T-cell (primary cell): ENCODE measurements at regions of chr7 and their contacts with region 1.

Region 1: DNA sequence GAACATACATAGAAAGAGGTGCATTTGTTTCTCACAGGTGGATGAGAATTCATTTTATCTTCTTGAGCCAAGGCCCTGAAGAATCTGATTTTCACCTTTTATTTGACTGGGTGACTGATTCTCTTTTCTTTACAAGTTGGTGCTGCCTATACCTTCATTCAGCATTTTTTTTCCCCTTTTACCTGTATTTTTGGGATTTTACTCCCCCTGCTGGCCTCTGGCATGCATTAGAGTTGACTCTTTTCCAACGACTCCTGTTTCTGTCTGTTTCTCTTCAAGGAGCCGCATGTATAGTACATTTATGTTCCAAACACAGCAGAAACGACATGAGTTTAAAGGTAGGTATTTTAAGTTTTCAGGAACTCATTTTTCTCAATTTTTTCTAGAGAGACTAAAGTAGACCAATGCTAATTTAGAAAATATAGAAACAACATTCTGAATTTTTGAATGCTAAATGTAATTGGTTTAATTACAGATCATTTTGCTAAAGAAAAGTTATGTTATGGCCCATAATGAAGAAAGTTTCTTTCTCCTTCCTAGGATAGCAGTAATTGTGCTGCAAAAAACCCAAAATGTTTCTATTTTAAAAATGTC is 149.8 kb upstream of the HDAC9 start:
- DNase-seq: peak in 15 of 35 experiments; percentile 1 to 59 (median 7)
- ATAC-seq: no peak
- H3K4me3 ChIP-seq: no peak overlapping the region
- H3K4me3 Mint-ChIP-seq: no peak overlapping the region
- H3K27ac ChIP-seq: no peak overlapping the region
- H3K27ac Mint-ChIP-seq: no peak overlapping the region
- H3K4me1 ChIP-seq: no peaks in the 10 kb centered on the region
- H3K4me1 Mint-ChIP-seq: no peaks in the 10 kb centered on the region
- H3K27me3 ChIP-seq: no peaks in the 10 kb centered on the region
- H3K27me3 Mint-ChIP-seq: peaks cover 0 to 7% of the 10 kb centered on the region in 2 donors

Region 2: DNA sequence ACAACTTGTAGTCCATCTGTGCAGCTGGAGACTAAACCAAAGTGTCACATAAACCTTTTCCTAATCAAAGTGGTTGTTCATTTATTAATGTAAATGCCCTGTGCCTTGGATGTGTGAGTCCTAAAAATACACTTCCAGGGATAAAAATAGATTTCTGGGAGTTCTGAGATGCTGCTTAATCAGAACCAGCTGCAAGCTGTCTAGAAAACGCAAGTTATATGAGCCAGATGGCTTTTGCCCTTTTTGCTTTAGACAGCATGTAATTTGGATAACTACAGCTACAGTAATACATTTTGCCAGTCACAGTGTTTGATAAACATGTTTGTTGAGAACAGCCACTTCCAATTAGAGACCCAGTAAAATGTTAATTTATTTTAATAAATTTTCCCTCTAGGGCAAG is 133.0 kb before region 1 on chr7:
- CTCF ChIA-PET with region 1: interaction called in 1 of 2 experiments, 10 read pairs
- POLR2A ChIA-PET with region 1: no interaction called
- DNase-seq: no peak
- ATAC-seq: no peak
- H3K4me3 ChIP-seq: no peak overlapping the region
- H3K4me3 Mint-ChIP-seq: no peak overlapping the region
- H3K27ac ChIP-seq: no peak overlapping the region
- H3K27ac Mint-ChIP-seq: no peak overlapping the region
- H3K4me1 ChIP-seq: no peaks in the 10 kb centered on the region
- H3K4me1 Mint-ChIP-seq: no peaks in the 10 kb centered on the region
- H3K27me3 ChIP-seq: no peaks in the 10 kb centered on the region
- H3K27me3 Mint-ChIP-seq: peaks cover 3% of the 10 kb centered on the region in 2 donors

Region 3: GRCh38 chr7:18384491-18385143 is 38.9 kb after region 1 on chr7:
- CTCF ChIA-PET with region 1: no interaction called
- POLR2A ChIA-PET with region 1: no interaction called
- DNase-seq: no peak
- ATAC-seq: no peak
- H3K4me3 ChIP-seq: no peak overlapping the region
- H3K4me3 Mint-ChIP-seq: no peak overlapping the region
- H3K27ac ChIP-seq: no peak overlapping the region
- H3K27ac Mint-ChIP-seq: no peak overlapping the region
- H3K4me1 ChIP-seq: no peaks in the 10 kb centered on the region
- H3K4me1 Mint-ChIP-seq: no peaks in the 10 kb centered on the region
- H3K27me3 ChIP-seq: no peaks in the 10 kb centered on the region
- H3K27me3 Mint-ChIP-seq: peaks cover 0 to 5% of the 10 kb centered on the region in 2 donors